Naive thymus-derived CD4-positive, alpha-beta T cell (primary cell): ENCODE measurements at regions of chr20 and their contacts with region 1.

Region 1: DNA sequence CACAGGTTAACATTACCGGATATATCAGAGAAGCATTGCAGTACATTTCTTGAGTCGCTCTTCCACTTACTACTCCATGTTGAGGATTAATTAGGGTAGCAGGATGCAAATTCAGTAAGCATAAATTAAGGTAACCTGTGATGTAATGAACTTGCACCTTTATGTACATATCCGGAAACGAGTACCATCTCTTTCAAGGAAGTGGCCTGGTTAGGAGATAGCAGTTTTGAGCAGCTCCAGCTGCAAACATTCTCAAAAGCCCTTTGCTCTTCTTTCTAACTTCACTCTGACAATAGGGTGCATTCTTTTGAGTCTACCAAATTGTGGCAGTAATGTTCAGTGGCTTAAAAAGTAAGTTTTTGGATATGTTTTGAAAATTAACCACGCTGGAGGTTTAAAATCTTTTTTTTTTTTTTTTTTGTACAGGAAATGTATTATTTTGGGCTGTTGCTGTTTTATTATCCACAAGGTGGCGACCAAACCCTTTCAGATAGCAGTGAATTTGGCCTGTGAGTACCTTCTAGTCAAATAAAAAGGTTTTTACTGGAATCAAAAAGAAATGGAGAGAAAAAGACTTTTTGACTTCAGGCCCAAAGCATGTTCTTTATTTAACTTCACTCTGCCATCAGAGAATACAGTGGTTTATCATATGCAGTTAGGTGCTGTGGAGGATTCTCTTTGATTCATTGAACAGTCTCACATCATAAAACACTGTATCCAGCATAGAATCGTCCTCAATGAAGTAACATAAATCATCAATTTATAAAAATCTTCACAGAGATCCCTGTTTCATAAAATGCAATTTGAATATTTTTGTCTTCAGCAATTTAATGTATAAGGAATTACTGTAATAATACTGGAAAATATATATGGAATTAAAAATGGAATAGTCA is 8.9 kb downstream of the FAM217B start:
- DNase-seq: peak in 7 of 9 donors; percentile 56 to 76 (median 72)
- ATAC-seq: peak; percentile 90
- H3K4me3 ChIP-seq: no peak overlapping the region
- H3K4me3 Mint-ChIP-seq: peak overlapping the region in 9 of 10 donors; percentile 34 to 80 (median 70)
- H3K27ac ChIP-seq: peak overlapping the region; percentile 55
- H3K27ac Mint-ChIP-seq: peak overlapping the region; percentile 82 to 95 (median 89)
- H3K4me1 ChIP-seq: peaks cover 0 to 10% of the 10 kb centered on the region in 2 donors
- H3K4me1 Mint-ChIP-seq: peaks cover 11 to 38% (median 22%) of the 10 kb centered on the region in 7 donors
- H3K27me3 ChIP-seq: no peaks in the 10 kb centered on the region
- H3K27me3 Mint-ChIP-seq: no peaks in the 10 kb centered on the region

Region 2: DNA sequence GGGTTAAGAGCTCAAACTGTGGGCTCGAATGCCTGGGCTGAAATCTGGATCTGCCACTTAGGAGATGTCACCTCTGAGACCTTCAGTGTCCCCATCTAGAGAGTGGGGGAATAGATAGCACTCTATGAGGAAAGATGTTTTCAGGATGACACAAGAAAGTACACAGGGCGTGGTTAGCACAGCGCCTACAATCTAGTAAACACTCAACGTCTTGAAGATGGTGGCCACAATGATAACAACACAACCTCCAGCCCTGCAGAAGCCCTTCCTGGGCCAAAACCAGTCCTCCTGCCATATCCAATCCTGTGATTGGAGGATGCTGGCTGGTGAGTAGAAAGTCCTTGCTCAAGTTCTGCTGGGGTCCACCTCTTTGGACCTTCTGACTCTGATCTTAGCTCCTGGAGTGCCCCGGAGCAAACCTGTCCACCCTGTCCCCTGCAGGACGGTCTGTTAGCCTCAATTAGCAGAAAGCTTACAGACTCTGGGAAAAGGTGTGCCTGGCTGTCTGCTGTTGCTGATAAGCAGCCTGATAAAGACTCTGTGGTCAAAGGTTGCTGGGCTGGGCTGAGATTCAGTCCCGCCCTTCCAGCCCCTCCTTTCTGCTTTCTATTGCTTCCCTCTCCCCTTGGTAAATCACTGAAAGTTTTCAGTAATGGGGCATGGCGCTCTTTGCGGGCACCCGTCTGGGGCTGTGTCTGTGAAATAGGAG is 640.4 kb before region 1 on chr20:
- CTCF ChIA-PET with region 1: no interaction called
- POLR2A ChIA-PET with region 1: no interaction called
- intact Hi-C with region 1: no loop called
- DNase-seq: no peak
- ATAC-seq: no peak
- H3K4me3 ChIP-seq: no peak overlapping the region
- H3K4me3 Mint-ChIP-seq: no peak overlapping the region
- H3K27ac ChIP-seq: no peak overlapping the region
- H3K27ac Mint-ChIP-seq: no peak overlapping the region
- H3K4me1 ChIP-seq: no peaks in the 10 kb centered on the region
- H3K4me1 Mint-ChIP-seq: peaks cover 0 to 5% (median 0%) of the 10 kb centered on the region in 7 donors
- H3K27me3 ChIP-seq: no peaks in the 10 kb centered on the region
- H3K27me3 Mint-ChIP-seq: peaks cover 0 to 17% (median 2%) of the 10 kb centered on the region in 5 donors

Region 3: GRCh38 chr20:59933849-59934596 is 15.1 kb before region 1 on chr20:
- CTCF ChIA-PET with region 1: interaction called, 13 read pairs
- POLR2A ChIA-PET with region 1: interaction called, 4 read pairs
- intact Hi-C with region 1: loop called in 1 of 2 experiments (anchors 2 kb)
- DNase-seq: peak; percentile 64 to 88 (median 73)
- ATAC-seq: peak; percentile 87
- H3K4me3 ChIP-seq: peak overlapping the region; percentile 74
- H3K4me3 Mint-ChIP-seq: peak overlapping the region; percentile 71 to 88 (median 80)
- H3K27ac ChIP-seq: peak overlapping the region; percentile 61
- H3K27ac Mint-ChIP-seq: peak overlapping the region in 5 of 9 donors; percentile 17 to 81 (median 59)
- H3K4me1 ChIP-seq: peaks cover 8 to 9% of the 10 kb centered on the region in 2 donors
- H3K4me1 Mint-ChIP-seq: peaks cover 9 to 52% (median 39%) of the 10 kb centered on the region in 7 donors
- H3K27me3 ChIP-seq: no peaks in the 10 kb centered on the region
- H3K27me3 Mint-ChIP-seq: no peaks in the 10 kb centered on the region

Region 4: GRCh38 chr20:60137629-60138245 is 188.7 kb after region 1 on chr20:
- CTCF ChIA-PET with region 1: no interaction called
- POLR2A ChIA-PET with region 1: no interaction called
- intact Hi-C with region 1: loop called (anchors 1 to 10 kb)
- DNase-seq: peak in 4 of 9 donors; percentile 11 to 31 (median 18)
- ATAC-seq: peak; percentile 65
- H3K4me3 ChIP-seq: peak overlapping the region; percentile 48
- H3K4me3 Mint-ChIP-seq: peak overlapping the region; percentile 58 to 93 (median 80)
- H3K27ac ChIP-seq: no peak overlapping the region
- H3K27ac Mint-ChIP-seq: peak overlapping the region in 2 of 9 donors; percentile 4 to 33
- H3K4me1 ChIP-seq: no peaks in the 10 kb centered on the region
- H3K4me1 Mint-ChIP-seq: peaks cover 0 to 25% (median 14%) of the 10 kb centered on the region in 7 donors
- H3K27me3 ChIP-seq: no peaks in the 10 kb centered on the region
- H3K27me3 Mint-ChIP-seq: no peaks in the 10 kb centered on the region

Region 5: DNA sequence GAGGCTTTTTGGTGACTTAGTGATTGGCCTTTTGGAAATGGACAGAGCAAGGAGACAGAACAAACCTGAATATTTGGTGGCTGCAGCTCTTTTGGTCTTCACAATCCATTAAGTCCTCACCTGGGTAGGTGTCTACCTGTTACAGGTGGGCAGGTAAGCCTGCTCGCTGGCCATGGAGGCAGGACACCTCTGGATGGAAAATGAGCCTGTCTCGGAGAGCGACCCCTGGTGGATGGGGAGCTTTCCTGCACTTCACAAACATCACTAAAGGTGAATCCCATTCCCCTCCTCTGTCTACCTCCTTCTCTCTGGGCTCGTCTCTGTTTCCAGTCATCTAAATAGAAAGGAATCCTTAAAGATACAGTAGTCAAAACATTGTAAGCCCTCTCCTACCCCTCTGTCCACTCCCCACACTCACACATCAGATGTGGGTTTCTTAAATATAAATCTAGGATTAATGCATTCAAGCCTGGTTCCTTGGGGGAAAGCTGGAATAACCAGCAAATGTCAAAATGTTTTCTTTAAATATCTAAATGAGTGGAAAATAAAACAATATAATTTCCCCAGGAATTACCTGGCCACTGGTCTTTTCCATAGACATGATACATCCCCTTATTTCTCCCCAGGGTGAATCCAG is 314.0 kb after region 1 on chr20:
- CTCF ChIA-PET with region 1: interaction called, 13 read pairs
- POLR2A ChIA-PET with region 1: no interaction called
- intact Hi-C with region 1: loop called in 1 of 2 experiments (anchors 1 kb)
- DNase-seq: peak in 8 of 9 donors; percentile 26 to 57 (median 43)
- ATAC-seq: peak; percentile 52
- H3K4me3 ChIP-seq: no peak overlapping the region
- H3K4me3 Mint-ChIP-seq: no peak overlapping the region
- H3K27ac ChIP-seq: no peak overlapping the region
- H3K27ac Mint-ChIP-seq: no peak overlapping the region
- H3K4me1 ChIP-seq: peaks cover 0 to 10% of the 10 kb centered on the region in 2 donors
- H3K4me1 Mint-ChIP-seq: peaks cover 4 to 33% (median 23%) of the 10 kb centered on the region in 7 donors
- H3K27me3 ChIP-seq: no peaks in the 10 kb centered on the region
- H3K27me3 Mint-ChIP-seq: no peaks in the 10 kb centered on the region

Region 6: GRCh38 chr20:61234803-61235113 is 1285.7 kb after region 1 on chr20:
- CTCF ChIA-PET with region 1: no interaction called
- POLR2A ChIA-PET with region 1: no interaction called
- intact Hi-C with region 1: loop called (anchors 2 to 10 kb)
- DNase-seq: no peak
- ATAC-seq: no peak
- H3K4me3 ChIP-seq: no peak overlapping the region
- H3K4me3 Mint-ChIP-seq: no peak overlapping the region
- H3K27ac ChIP-seq: no peak overlapping the region
- H3K27ac Mint-ChIP-seq: no peak overlapping the region
- H3K4me1 ChIP-seq: no peaks in the 10 kb centered on the region
- H3K4me1 Mint-ChIP-seq: no peaks in the 10 kb centered on the region
- H3K27me3 ChIP-seq: no peaks in the 10 kb centered on the region
- H3K27me3 Mint-ChIP-seq: peaks cover 0 to 17% (median 5%) of the 10 kb centered on the region in 5 donors